H1 (cell line): ENCODE measurements at regions of chr5 and their contacts with region 1.

Region 1: DNA sequence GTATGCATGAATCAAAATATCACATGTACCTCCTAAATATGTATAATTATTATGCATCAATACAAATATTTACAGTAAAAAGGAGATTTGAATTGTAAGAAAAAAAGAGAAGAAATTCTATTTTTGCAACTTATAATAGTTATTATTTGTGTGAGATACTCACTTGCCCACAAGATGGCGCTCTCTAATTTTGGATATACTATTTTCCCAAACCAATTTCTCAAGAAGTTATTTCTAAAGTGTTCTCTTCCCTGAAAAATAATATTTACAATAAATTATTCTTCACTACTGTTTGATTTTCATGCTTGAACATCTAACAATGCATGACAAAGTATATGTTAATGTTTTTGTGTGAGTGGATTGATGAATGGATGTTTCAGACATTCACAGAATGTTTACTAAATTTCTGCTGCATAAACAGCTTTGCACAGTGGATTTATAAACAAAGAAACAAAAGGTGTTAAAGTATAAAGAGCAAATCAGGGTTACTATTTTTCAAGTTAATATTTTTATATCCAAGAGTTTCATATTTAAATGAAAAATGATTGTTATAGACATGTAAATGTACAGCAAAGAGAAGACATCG is 503.4 kb downstream of the PDE4D start:
- DNase-seq: no peak
- H3K4me3 ChIP-seq: no peak overlapping the region
- H3K27ac ChIP-seq: no peak overlapping the region
- H3K4me1 ChIP-seq: no peaks in the 10 kb centered on the region
- H3K27me3 ChIP-seq: no peaks in the 10 kb centered on the region
- CTCF ChIP-seq: peak in 2 of 3 experiments; percentile 20 to 45; a peak in 2 of 4 replicates
- EP300 ChIP-seq: no peak
- POLR2A ChIP-seq: no peak
- RAD21 ChIP-seq: peak in 1 of 2 experiments; percentile 70; a peak in 3 of 4 replicates

Region 2: DNA sequence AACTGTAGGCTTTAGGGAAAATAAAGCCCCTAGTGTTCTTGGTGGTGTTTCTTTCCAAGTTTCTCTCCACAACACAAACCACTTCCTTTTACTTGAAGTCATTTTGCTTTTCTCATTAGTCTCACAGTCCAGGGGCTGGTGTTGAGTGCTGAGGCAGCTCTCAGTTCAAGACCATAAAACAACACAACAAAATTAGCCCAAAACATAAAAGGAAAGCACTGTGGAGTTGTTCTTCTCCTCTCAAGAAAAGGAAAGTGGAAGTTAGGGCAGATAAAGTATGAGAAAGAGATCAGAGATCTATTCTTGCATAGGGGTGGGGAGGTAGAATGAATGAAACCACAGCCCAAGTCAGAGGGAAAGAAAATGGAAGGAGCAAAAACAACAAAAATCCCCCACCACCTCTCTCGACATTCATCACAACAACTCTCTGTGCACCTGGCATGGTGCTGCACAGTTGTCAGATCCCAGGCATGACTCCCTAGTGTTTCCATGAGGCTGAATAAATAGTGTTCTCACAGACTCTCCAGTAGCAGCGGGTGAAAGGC is 237.4 kb before region 1 on chr5:
- CTCF ChIA-PET with region 1: no interaction called
- POLR2A ChIA-PET with region 1: no interaction called
- DNase-seq: no peak
- H3K4me3 ChIP-seq: no peak overlapping the region
- H3K27ac ChIP-seq: no peak overlapping the region
- H3K4me1 ChIP-seq: peaks cover 0 to 3% (median 1%) of the 10 kb centered on the region in 4 experiments; a peak in 1 of 7 replicates
- H3K27me3 ChIP-seq: no peaks in the 10 kb centered on the region
- CTCF ChIP-seq: no peak
- EP300 ChIP-seq: no peak
- POLR2A ChIP-seq: no peak
- RAD21 ChIP-seq: no peak

Region 3: DNA sequence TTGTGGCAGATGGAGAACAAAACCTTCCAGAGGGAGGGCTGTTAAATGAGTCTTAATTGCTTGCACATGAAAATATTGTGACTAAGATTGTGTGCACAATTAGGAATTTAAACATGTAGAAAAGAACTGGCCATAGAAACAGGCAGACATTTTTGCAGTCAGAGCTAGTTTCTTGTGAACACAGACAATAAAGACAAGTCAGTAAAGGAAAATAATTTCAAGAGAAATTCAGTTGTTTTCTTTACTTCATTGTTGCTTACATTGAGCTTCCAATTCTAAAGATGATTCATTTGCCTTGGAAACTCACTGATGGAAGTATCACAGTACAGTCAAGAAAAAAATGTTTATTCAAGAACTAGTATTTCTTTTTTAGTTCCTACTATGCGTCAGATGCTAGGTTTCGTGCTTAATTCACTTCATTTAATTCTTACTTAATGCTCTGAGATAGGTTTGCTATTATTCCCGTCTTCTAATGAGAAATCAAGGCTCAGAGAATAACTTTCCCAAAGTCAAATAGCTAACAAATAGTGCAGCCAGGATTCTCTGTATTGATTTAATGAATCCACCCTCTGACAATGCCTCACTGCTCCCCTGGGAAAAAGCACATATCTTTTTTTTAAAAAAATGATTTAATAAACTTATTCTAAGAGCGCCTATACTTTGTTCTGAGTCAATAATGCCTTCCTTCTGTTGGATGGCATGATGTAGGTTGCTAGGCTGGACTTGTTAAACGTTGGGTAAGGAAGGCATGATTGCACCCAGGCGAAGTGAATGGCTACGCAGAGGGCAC is 225.9 kb before region 1 on chr5:
- CTCF ChIA-PET with region 1: no interaction called
- POLR2A ChIA-PET with region 1: no interaction called
- DNase-seq: no peak
- H3K4me3 ChIP-seq: no peak overlapping the region
- H3K27ac ChIP-seq: no peak overlapping the region
- H3K4me1 ChIP-seq: no peaks in the 10 kb centered on the region; a peak in 1 of 7 replicates
- H3K27me3 ChIP-seq: no peaks in the 10 kb centered on the region
- CTCF ChIP-seq: no peak
- EP300 ChIP-seq: no peak
- POLR2A ChIP-seq: no peak
- RAD21 ChIP-seq: no peak

Region 4: DNA sequence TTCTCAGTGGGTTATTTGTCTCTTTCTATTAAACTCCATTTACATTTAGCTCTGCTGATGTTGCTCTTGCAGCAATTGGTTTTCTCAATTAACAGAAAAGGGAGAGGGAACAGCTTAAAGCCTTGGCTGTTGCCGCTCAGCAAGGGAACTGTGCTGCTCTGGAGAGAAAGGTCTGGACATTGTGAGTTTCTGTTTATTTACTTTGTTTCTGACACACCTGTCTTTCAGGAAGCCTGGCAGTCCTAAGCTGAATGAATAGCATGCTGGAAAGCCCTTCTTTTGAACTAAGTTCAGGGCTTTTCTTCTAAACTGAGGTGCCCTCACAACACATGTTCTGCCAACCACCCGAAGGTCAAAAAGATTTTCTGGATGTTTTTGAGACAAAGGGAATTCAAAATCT is 11.5 kb after region 1 on chr5:
- CTCF ChIA-PET with region 1: interaction called, 18 read pairs
- POLR2A ChIA-PET with region 1: no interaction called
- DNase-seq: no peak
- H3K4me3 ChIP-seq: no peak overlapping the region
- H3K27ac ChIP-seq: no peak overlapping the region
- H3K4me1 ChIP-seq: no peaks in the 10 kb centered on the region
- H3K27me3 ChIP-seq: no peaks in the 10 kb centered on the region
- CTCF ChIP-seq: no peak
- EP300 ChIP-seq: no peak
- POLR2A ChIP-seq: no peak
- RAD21 ChIP-seq: no peak

Region 5: GRCh38 chr5:59496524-59497134 is 106.5 kb after region 1 on chr5:
- CTCF ChIA-PET with region 1: interaction called, 20 read pairs
- POLR2A ChIA-PET with region 1: no interaction called
- DNase-seq: peak in 1 of 2 experiments; percentile 64
- H3K4me3 ChIP-seq: no peak overlapping the region
- H3K27ac ChIP-seq: no peak overlapping the region
- H3K4me1 ChIP-seq: no peaks in the 10 kb centered on the region
- H3K27me3 ChIP-seq: no peaks in the 10 kb centered on the region
- CTCF ChIP-seq: peak; percentile 55 to 72 (median 71)
- EP300 ChIP-seq: no peak
- POLR2A ChIP-seq: no peak
- RAD21 ChIP-seq: peak; percentile 64 to 72

Region 6: DNA sequence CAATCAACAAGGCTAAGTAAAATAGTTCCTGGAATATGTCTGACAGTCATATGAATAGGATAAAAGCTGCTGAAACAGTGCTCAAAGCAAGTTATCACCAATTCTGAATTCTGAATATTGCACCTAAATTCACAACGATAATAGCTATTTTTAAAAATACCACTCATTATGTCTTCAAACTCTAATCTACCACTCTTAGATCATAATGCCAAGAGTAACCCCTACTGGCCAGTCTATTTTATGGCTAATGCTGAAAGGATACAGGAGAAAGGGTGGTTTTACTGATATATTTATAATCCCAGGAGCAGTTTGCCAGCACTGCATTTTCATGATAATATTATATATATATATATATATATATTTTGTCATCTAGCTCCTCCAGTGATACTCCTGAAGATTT is 270.6 kb after region 1 on chr5:
- CTCF ChIA-PET with region 1: interaction called, 13 read pairs
- POLR2A ChIA-PET with region 1: no interaction called
- DNase-seq: no peak
- H3K4me3 ChIP-seq: no peak overlapping the region
- H3K27ac ChIP-seq: no peak overlapping the region
- H3K4me1 ChIP-seq: peaks cover 0 to 3% (median 1%) of the 10 kb centered on the region in 4 experiments; a peak in 2 of 7 replicates
- H3K27me3 ChIP-seq: no peaks in the 10 kb centered on the region
- CTCF ChIP-seq: peak in 2 of 3 experiments; percentile 18 to 37; a peak in 2 of 4 replicates
- EP300 ChIP-seq: no peak
- POLR2A ChIP-seq: no peak
- RAD21 ChIP-seq: peak; percentile 59 to 67